MCF 10A (cell line): ENCODE measurements at regions of chr10 and their contacts with region 1.

Region 1: GRCh38 chr10:63720072-63720537 is 198.9 kb downstream of the REEP3 start:
- DNase-seq: peak; percentile 74
- H3K4me3 Mint-ChIP-seq: no peak overlapping the region
- H3K27ac Mint-ChIP-seq: no peak overlapping the region
- H3K4me1 Mint-ChIP-seq: no peaks in the 10 kb centered on the region
- H3K27me3 Mint-ChIP-seq: peaks cover 7% of the 10 kb centered on the region
- CTCF ChIP-seq: peak; percentile 93

Region 2: GRCh38 chr10:63166742-63167258 is 553.3 kb before region 1 on chr10:
- CTCF ChIA-PET with region 1: interaction called, 266 read pairs
- POLR2A ChIA-PET with region 1: interaction called, 21 read pairs
- intact Hi-C with region 1: loop called (anchors 1 kb)
- DNase-seq: peak; percentile 83
- H3K4me3 Mint-ChIP-seq: no peak overlapping the region
- H3K27ac Mint-ChIP-seq: no peak overlapping the region
- H3K4me1 Mint-ChIP-seq: no peaks in the 10 kb centered on the region
- H3K27me3 Mint-ChIP-seq: no peaks in the 10 kb centered on the region
- CTCF ChIP-seq: peak; percentile 68

Region 3: GRCh38 chr10:63217120-63217605 is 502.9 kb before region 1 on chr10:
- CTCF ChIA-PET with region 1: interaction called, 29 read pairs
- POLR2A ChIA-PET with region 1: interaction called, 6 read pairs
- intact Hi-C with region 1: loop called (anchors 2 kb)
- DNase-seq: peak; percentile 66
- H3K4me3 Mint-ChIP-seq: no peak overlapping the region
- H3K27ac Mint-ChIP-seq: peak overlapping the region; percentile 39
- H3K4me1 Mint-ChIP-seq: peaks cover 10% of the 10 kb centered on the region
- H3K27me3 Mint-ChIP-seq: no peaks in the 10 kb centered on the region
- CTCF ChIP-seq: peak; percentile 56

Region 4: DNA sequence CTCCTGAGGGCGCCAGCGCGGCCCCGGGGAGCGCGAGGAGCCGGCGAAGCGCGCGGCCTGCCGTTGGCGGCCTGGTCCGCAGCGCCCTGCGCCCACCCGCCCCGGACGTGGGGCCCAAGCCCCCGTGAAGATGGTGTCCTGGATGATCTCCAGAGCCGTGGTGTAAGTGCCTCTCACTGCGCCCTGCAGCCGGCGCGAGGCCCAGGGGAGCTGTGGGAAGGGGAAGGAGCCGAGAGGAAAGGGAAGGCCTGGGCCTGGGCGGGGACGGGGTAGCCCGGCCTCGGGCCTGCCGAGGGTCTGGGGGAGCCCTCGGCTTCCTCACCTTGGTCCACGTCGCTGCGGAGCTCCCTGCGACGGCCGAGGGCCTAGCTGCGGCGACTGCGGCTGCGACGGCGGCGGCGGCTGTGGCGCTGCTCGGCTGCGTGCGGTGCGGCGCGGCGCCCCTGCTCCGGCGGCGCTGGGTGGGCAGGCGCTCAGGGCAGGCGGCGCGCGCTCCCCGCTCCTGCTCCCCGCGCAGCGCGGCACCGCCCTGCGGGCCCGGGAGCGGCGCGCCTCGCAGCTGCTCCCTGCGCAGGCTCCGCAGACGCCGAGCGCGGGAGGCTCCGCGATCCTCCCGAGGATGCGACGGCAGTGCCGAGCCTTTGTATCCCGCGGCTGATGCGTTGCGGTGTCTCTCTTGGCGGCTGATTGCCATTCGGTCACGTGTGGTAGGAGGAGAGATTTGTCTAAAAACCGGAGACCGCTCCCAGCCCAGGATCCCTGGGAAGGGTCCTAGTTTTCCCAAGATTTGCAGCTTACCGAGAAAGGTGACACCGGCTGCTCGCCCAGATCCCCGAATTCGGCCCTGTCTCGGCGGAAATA is 198.5 kb before region 1 on chr10:
- CTCF ChIA-PET with region 1: interaction called, 11 read pairs
- POLR2A ChIA-PET with region 1: interaction called, 5 read pairs
- intact Hi-C with region 1: no loop called
- DNase-seq: peak; percentile 65
- H3K4me3 Mint-ChIP-seq: peak overlapping the region; percentile 86
- H3K27ac Mint-ChIP-seq: peak overlapping the region; percentile 83
- H3K4me1 Mint-ChIP-seq: peaks cover 46% of the 10 kb centered on the region
- H3K27me3 Mint-ChIP-seq: no peaks in the 10 kb centered on the region
- CTCF ChIP-seq: no peak

Region 5: GRCh38 chr10:63700209-63700613 is 19.9 kb before region 1 on chr10:
- CTCF ChIA-PET with region 1: interaction called, 12 read pairs
- POLR2A ChIA-PET with region 1: no interaction called
- intact Hi-C with region 1: no loop called
- DNase-seq: peak; percentile 90
- H3K4me3 Mint-ChIP-seq: peak overlapping the region; percentile 15
- H3K27ac Mint-ChIP-seq: peak overlapping the region; percentile 91
- H3K4me1 Mint-ChIP-seq: peaks cover 32% of the 10 kb centered on the region
- H3K27me3 Mint-ChIP-seq: no peaks in the 10 kb centered on the region
- CTCF ChIP-seq: no peak

Region 6: GRCh38 chr10:63738410-63738809 is 18.3 kb after region 1 on chr10:
- CTCF ChIA-PET with region 1: interaction called, 10 read pairs
- POLR2A ChIA-PET with region 1: interaction called, 6 read pairs
- intact Hi-C with region 1: no loop called
- DNase-seq: peak; percentile 61
- H3K4me3 Mint-ChIP-seq: no peak overlapping the region
- H3K27ac Mint-ChIP-seq: no peak overlapping the region
- H3K4me1 Mint-ChIP-seq: peaks cover 12% of the 10 kb centered on the region
- H3K27me3 Mint-ChIP-seq: no peaks in the 10 kb centered on the region
- CTCF ChIP-seq: no peak

Region 7: GRCh38 chr10:63767138-63767801 is 47.2 kb after region 1 on chr10:
- CTCF ChIA-PET with region 1: interaction called, 49 read pairs
- POLR2A ChIA-PET with region 1: interaction called, 3 read pairs
- intact Hi-C with region 1: loop called (anchors 2 kb)
- DNase-seq: peak; percentile 29
- H3K4me3 Mint-ChIP-seq: no peak overlapping the region
- H3K27ac Mint-ChIP-seq: no peak overlapping the region
- H3K4me1 Mint-ChIP-seq: peaks cover 13% of the 10 kb centered on the region
- H3K27me3 Mint-ChIP-seq: peaks cover under 1% of the 10 kb centered on the region
- CTCF ChIP-seq: peak; percentile 39